ENCODE measurements at regions of chr4 and their contacts with region 1.

Region 1: DNA sequence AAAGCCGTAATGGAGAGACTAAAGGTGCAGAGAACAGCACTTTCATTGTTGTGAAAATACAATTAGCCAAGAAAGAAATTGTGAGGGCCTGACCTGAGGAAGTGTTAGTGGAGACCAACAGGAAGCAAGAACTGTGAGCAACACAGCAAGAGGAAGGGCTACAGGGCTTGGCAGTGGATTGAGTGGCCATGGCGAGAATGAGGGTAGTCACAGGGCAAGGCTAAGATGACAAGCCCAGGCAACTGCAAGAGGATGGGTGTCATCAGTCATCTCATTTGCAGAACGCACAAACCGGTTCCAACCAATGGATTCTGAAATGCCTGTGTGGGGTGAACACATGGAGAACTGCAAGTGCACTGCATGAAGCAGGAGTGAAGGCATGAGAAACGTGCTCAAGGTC is 3.6 kb downstream of the SLC10A6 start:
- DNase-seq: peak; percentile 89
- H3K4me3 ChIP-seq: no peak overlapping the region
- H3K27ac ChIP-seq: peak overlapping the region; percentile 83
- H3K4me1 ChIP-seq: peaks cover 54% of the 10 kb centered on the region
- H3K27me3 ChIP-seq: no peaks in the 10 kb centered on the region
- CTCF ChIP-seq: no peak

Region 2: GRCh38 chr4:86831262-86832130 is 14.1 kb before region 1 on chr4:
- CTCF ChIA-PET with region 1: no interaction called
- dilution Hi-C with region 1: no loop called
- in situ Hi-C with region 1: no loop called
- intact Hi-C with region 1: loop called (anchors 1 kb)
- DNase-seq: peak; percentile 97
- H3K4me3 ChIP-seq: no peak overlapping the region
- H3K27ac ChIP-seq: peak overlapping the region; percentile 94
- H3K4me1 ChIP-seq: peaks cover 32% of the 10 kb centered on the region
- H3K27me3 ChIP-seq: no peaks in the 10 kb centered on the region
- CTCF ChIP-seq: no peak